ENCODE measurements at regions of chr1 and their contacts with region 1.

Region 1: DNA sequence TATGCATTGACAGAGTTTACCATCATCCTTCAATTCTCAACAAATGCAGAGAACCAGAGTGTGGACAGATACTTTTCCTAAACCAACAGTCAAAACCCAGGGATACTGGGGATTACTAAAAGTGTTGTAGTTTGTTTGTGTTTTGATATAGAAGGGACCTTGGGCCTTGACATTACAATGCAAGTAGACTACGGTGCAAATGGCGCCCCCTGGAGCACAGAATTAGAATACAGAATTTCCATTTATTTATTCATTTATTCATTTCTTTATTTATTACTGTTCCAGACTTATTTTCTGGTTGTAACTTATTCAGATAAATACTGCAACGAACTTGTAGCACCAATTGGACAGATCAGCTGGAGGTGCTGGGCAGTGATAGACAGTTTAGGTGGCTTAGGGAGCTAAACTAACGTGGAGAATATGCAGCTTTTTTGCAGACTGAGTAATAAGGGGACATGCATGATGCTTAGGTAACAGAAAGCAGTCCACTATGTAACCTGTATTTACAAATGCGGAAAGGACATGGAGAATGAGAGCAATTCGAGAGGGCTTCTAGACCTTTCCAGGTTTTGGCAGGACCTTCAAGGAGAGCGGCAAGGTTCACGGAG is 42.6 kb downstream of the KIRREL1 start:
- DNase-seq: no peak
- H3K4me3 ChIP-seq: no peak overlapping the region
- H3K27ac ChIP-seq: no peak overlapping the region
- H3K27me3 ChIP-seq: no peaks in the 10 kb centered on the region
- CTCF ChIP-seq: peak; percentile 76

Region 2: DNA sequence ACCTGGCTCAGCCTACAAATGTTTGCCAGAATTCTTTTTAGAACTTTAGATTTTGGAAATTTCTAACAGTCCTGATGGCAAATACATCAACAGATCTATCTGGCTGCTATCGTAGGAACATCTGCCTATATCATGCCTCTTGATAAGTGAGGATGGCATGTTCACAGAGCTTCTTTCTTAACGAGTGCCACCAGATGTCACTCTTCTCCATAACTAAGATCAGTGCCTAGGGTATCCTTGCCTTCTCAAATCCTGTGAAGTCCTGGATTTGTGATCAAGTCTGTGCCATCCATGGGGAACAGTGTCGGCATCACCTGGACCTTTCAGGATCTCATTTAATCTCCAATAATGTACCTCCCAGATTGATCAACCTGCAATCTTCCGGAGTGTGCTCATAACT is 158.0 kb before region 1 on chr1:
- CTCF ChIA-PET with region 1: no interaction called
- POLR2A ChIA-PET with region 1: no interaction called
- DNase-seq: peak; percentile 7
- H3K4me3 ChIP-seq: no peak overlapping the region
- H3K27ac ChIP-seq: no peak overlapping the region
- H3K27me3 ChIP-seq: no peaks in the 10 kb centered on the region
- CTCF ChIP-seq: peak; percentile 46

Region 3: DNA sequence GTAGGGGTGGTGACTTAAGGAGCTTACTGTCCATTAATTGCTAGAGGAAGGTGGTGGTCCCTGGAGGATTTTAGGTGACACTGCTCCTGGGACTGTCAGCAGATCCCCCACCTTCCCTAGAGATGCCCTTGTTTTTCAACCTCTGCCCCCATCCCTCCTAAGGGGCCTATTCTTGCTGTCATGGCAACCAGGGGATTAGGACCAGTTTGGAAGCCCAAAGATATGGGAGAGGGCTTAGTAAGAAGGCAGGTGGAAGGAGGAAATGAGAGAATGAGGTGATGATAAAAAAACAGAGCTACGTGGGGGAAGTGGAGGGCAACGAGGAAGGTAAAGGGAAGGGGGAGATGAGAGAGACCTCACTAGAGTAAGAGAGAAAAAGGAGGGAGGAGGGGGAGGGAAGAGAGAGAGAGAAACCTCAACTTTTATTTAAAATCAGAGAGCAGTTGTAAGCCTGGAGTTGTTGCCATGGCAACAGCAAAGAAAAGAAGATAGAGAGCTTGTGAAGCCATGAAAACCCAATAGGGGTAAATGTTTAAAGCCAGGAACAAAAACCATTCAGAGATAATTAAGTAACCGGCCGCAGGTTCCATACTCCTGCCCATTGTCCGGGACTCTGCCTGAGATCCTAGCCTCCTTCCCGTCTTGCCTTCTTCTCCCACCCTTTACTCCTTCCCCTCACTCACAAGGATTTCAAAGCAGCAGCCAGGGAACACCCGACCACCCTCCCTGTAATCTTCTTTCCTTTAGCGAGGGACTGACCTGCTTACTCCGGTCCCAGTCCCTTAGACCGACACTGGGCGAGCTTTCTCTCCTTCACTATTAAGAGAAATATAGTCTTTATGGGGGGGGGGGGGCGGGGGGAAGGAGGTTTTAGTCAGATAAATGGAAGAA is 22.0 kb before region 1 on chr1:
- CTCF ChIA-PET with region 1: interaction called, 56 read pairs
- POLR2A ChIA-PET with region 1: interaction called, 6 read pairs
- DNase-seq: no peak
- H3K4me3 ChIP-seq: no peak overlapping the region
- H3K27ac ChIP-seq: peak overlapping the region; percentile 52
- H3K27me3 ChIP-seq: no peaks in the 10 kb centered on the region
- CTCF ChIP-seq: no peak

Region 4: GRCh38 chr1:158019171-158019868 is 16.8 kb before region 1 on chr1:
- CTCF ChIA-PET with region 1: interaction called, 56 read pairs
- POLR2A ChIA-PET with region 1: interaction called, 8 read pairs
- DNase-seq: peak; percentile 87
- H3K4me3 ChIP-seq: peak overlapping the region; percentile 32
- H3K27ac ChIP-seq: peak overlapping the region; percentile 97
- H3K27me3 ChIP-seq: no peaks in the 10 kb centered on the region
- CTCF ChIP-seq: no peak

Region 5: DNA sequence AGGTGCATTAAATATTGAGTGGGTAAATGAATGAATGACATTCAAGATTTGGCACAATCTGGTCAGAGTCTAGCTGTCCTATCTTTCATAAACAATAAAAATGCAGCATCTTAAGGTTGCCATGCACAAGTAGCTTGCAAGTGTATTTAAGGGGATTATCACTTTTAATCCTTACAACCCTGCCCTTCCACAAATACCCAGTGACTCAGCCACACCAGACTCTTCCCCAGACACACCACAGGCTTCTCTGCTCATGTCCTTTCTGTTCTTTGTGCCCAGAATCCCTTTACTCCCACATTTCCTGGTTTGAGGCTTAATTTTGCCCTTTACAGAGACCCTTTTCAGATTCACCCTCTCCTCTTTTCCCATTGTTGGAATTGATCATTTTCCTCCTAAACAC is 17.2 kb after region 1 on chr1:
- CTCF ChIA-PET with region 1: interaction called, 13 read pairs
- POLR2A ChIA-PET with region 1: no interaction called
- DNase-seq: no peak
- H3K4me3 ChIP-seq: no peak overlapping the region
- H3K27ac ChIP-seq: no peak overlapping the region
- H3K27me3 ChIP-seq: no peaks in the 10 kb centered on the region
- CTCF ChIP-seq: no peak

Region 6: GRCh38 chr1:158107916-158108315 is 71.8 kb after region 1 on chr1:
- CTCF ChIA-PET with region 1: no interaction called
- POLR2A ChIA-PET with region 1: no interaction called
- DNase-seq: no peak
- H3K4me3 ChIP-seq: no peak overlapping the region
- H3K27ac ChIP-seq: no peak overlapping the region
- H3K27me3 ChIP-seq: peaks cover 12% of the 10 kb centered on the region
- CTCF ChIP-seq: no peak